ENCODE measurements at regions of chr1 and their contacts with region 1.

Region 1: GRCh38 chr1:225772323-225772768 is 5.3 kb upstream of the SRP9 start:
- DNase-seq: peak; percentile 64 to 97 (median 80)

Region 2: DNA sequence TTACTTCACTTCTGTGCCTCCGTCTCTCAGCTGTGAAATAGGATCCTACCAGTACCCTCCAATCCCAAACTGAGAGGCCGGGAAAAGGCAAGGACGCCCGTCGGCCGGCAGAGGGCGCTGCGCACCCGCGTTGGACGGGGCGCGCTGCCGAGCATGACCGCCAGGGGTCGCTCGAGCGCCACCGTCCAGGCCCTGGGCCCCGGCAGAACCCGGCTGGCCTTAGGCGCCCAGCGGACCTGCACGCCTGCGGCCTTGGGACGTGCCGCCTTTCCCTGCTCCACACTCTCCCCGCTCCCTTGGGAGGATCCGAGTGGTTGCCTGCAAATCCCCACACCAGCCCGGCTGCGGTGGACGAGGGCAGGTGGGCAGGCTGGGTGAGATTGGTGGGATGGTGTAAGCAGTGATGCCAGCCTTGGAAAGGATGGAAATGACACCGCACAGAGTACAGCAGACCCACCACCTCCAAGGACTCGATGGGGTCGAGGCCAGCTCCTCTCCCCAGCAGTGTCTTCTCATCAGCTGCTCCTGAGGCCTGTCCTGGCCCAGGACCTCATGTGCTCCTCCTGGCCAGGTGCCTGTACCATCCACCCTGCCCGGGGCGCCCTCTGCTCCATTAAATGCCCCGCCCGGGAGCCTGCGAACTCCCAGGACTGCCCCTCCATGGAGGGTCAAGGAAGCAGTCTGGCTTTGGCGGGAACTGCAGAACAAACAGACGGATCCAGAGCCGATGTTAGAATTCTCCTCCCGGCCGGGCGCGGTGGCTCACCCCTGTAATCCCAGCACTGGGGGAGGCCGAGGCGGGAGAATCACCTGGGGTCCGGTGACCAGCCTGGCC is 297.1 kb before region 1 on chr1:
- intact Hi-C with region 1: loop called (anchors 1 kb)
- DNase-seq: peak in 9 of 10 donors; percentile 52 to 95 (median 63)

Region 3: GRCh38 chr1:225592362-225593025 is 179.9 kb before region 1 on chr1:
- intact Hi-C with region 1: no loop called
- DNase-seq: no peak

Region 4: DNA sequence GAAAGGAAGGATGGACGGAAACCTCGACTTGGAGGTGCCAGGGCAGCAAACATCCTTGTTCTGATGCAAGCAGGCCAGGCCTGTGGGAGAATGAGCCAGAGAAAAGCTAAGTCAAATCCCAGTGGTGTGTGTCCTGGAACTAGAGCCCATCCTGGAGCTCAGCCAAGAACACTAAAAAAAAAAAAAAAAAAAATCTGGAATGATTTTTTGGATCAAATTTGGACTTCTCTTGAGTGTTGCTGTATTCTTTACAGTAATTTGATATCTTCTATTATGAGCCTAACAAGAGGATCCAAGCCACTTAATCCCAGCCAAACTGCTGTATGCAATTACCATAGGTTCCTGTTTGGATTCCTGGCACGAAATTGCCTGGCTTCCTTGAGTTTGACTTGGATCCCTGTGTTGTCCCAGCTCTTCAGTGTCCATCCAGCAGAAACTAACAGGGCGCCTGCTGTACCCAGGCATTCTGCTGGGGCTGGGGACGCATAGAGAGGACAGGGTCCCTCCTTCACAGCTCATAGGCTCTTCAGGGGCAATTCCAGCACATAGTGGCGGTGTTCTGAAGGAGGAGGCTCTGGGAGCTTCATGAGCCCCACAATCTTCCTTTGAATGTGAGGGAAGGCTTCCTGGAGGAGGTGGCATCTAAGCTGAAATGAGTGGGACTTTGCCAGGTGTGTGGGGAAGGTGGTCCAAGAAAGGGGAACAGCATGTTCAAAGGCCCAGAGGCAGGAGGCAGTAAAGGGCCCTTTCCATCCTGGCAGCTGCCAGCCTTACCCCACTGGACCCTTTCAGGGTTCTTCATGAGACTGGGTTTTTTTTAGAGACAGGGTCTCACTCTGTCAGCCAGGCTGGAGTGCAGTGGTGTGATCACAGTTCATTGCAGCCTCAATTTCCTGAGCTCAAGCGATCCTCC is 62.3 kb after region 1 on chr1:
- intact Hi-C with region 1: no loop called
- DNase-seq: peak in 2 of 10 donors; percentile 45 to 62

Region 5: GRCh38 chr1:225923692-225924555 is 151.6 kb after region 1 on chr1 and contains the start of gene PYCR2:
- intact Hi-C with region 1: no loop called
- DNase-seq: peak; percentile 91 to 99 (median 94)

Region 6: GRCh38 chr1:226001963-226002666 is 229.8 kb after region 1 on chr1:
- intact Hi-C with region 1: no loop called
- DNase-seq: peak in 6 of 10 donors; percentile 16 to 82 (median 34)